ENCODE measurements at regions of chr11 and their contacts with region 1.

Region 1: GRCh38 chr11:122853971-122854446 is 15.7 kb downstream of the CRTAM start:
- DNase-seq: peak in 24 of 35 experiments; percentile 6 to 84 (median 42)
- ATAC-seq: no peak
- H3K4me3 ChIP-seq: no peak overlapping the region
- H3K4me3 Mint-ChIP-seq: no peak overlapping the region
- H3K27ac ChIP-seq: peak overlapping the region; percentile 13
- H3K27ac Mint-ChIP-seq: no peak overlapping the region
- H3K4me1 ChIP-seq: peaks cover 15 to 53% of the 10 kb centered on the region in 2 experiments
- H3K4me1 Mint-ChIP-seq: peaks cover 39 to 52% (median 47%) of the 10 kb centered on the region in 3 donors
- H3K27me3 ChIP-seq: no peaks in the 10 kb centered on the region
- H3K27me3 Mint-ChIP-seq: no peaks in the 10 kb centered on the region

Region 2: DNA sequence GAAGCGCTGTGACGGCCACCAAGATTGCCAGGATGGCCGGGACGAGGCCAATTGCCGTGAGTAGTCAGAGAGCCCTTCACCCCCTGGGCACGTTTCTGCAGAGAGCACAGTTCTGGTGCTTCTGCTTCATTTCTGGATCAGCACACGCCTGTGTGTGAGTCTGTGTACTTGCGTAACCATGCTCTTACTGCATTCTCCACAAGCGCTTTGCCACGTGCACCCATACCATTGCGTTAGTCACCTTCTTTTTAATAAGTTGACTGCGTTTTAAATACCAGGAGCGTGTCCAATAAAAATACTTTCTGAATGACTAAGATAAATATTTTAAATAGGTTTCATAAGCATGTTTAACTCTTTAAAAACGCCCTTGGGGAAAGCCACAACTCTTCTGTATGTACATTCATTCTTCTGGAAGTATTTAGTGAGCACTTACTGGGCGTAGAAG is 1258.3 kb before region 1 on chr11:
- CTCF ChIA-PET with region 1: no interaction called
- POLR2A ChIA-PET with region 1: no interaction called
- DNase-seq: no peak
- ATAC-seq: no peak
- H3K4me3 ChIP-seq: no peak overlapping the region
- H3K4me3 Mint-ChIP-seq: no peak overlapping the region
- H3K27ac ChIP-seq: no peak overlapping the region
- H3K27ac Mint-ChIP-seq: no peak overlapping the region
- H3K4me1 ChIP-seq: peaks cover 0 to 4% of the 10 kb centered on the region in 2 experiments
- H3K4me1 Mint-ChIP-seq: peaks cover 9 to 19% (median 10%) of the 10 kb centered on the region in 3 donors
- H3K27me3 ChIP-seq: no peaks in the 10 kb centered on the region
- H3K27me3 Mint-ChIP-seq: no peaks in the 10 kb centered on the region

Region 3: DNA sequence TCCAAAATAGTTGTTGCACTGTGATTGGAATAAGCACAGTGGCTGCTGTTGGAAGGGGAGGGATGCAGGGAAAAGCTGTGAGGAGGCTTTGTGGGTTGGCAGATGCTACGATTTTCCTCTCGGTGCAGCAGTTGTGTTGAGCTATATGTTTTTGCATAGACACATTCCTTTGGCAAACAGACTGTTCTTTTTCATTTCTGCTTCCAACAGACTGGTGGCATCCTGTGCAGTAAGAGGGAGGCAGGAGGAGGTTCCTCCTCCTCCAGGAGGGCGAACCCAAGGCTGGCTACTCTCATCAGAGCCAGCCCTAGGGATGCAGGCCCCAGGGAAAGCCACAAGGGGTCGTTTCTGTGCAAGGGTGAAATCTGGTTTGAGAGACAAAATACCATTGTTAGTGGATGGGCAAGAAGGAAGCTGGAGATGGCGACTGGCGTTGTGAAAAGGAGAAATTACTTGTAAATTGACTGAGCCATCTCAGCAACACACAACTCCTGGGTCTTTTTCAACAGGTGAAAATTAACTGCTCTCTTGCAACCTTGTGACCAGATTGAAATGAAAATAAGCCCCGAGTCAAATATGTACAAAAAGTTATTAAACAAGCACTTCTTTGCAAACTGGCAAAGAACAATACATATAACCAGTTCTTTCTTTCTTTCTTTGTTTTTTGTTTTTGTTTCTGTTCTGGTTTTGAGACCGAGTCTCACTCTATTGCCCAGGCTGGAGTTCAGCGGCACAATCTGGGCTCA is 225.0 kb before region 1 on chr11:
- CTCF ChIA-PET with region 1: interaction called in 1 of 2 experiments, 20 read pairs
- POLR2A ChIA-PET with region 1: no interaction called
- DNase-seq: peak; percentile 7 to 78 (median 62)
- ATAC-seq: peak; percentile 85 to 94 (median 90)
- H3K4me3 ChIP-seq: no peak overlapping the region
- H3K4me3 Mint-ChIP-seq: no peak overlapping the region
- H3K27ac ChIP-seq: no peak overlapping the region
- H3K27ac Mint-ChIP-seq: no peak overlapping the region
- H3K4me1 ChIP-seq: peaks cover 8 to 10% of the 10 kb centered on the region in 2 experiments
- H3K4me1 Mint-ChIP-seq: peaks cover 7 to 11% (median 7%) of the 10 kb centered on the region in 3 donors
- H3K27me3 ChIP-seq: no peaks in the 10 kb centered on the region
- H3K27me3 Mint-ChIP-seq: no peaks in the 10 kb centered on the region

Region 4: GRCh38 chr11:122808478-122808869 is 45.5 kb before region 1 on chr11:
- CTCF ChIA-PET with region 1: interaction called, 4 to 12 read pairs
- POLR2A ChIA-PET with region 1: interaction called in 1 of 2 experiments, 4 read pairs
- DNase-seq: no peak
- ATAC-seq: no peak
- H3K4me3 ChIP-seq: no peak overlapping the region
- H3K4me3 Mint-ChIP-seq: peak overlapping the region in 1 of 3 donors; percentile 13
- H3K27ac ChIP-seq: no peak overlapping the region
- H3K27ac Mint-ChIP-seq: peak overlapping the region; percentile 62 to 84
- H3K4me1 ChIP-seq: peaks cover 7 to 15% of the 10 kb centered on the region in 2 experiments
- H3K4me1 Mint-ChIP-seq: peaks cover 40 to 56% (median 44%) of the 10 kb centered on the region in 3 donors
- H3K27me3 ChIP-seq: no peaks in the 10 kb centered on the region
- H3K27me3 Mint-ChIP-seq: no peaks in the 10 kb centered on the region

Region 5: DNA sequence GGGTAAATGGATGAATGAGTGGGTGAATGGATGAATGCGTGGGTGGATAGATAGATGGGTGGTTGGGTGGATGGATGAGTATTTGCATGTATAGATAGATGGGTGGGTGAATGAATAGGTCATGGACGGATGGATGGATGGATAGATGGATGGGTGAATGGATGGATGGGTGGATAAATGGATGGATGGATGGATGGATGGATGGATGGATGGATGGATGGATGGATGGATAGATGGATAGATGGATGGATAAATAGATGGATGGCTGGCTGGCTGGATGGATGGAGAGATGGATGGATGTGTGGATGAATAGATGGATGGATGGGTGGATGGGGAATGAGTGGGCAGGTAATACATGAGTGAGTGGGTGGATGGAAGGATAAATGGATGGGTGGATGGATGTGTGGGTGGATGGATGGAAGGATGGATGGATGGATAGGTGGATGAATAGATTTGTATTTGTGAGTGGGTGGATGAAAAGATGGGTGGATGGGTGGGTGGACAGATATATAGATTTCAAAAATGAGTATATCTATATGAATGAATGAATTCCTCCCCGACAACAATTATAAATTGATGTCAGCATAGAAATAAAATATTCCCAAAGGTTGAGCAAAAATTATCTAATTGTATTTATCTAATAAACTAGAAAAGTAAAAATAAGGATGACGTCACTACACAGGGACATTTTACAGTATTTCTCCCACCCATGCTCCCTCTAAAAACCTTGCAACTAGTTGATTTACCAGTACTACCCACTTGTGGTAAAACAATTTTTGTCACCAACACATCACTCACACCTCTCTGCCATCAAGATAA is 16.3 kb before region 1 on chr11:
- CTCF ChIA-PET with region 1: interaction called, 10 to 73 read pairs
- POLR2A ChIA-PET with region 1: interaction called, 3 to 29 read pairs
- DNase-seq: no peak
- ATAC-seq: no peak
- H3K4me3 ChIP-seq: no peak overlapping the region
- H3K4me3 Mint-ChIP-seq: peak overlapping the region; percentile 67 to 79 (median 69)
- H3K27ac ChIP-seq: peak overlapping the region; percentile 79
- H3K27ac Mint-ChIP-seq: peak overlapping the region; percentile 74 to 77
- H3K4me1 ChIP-seq: peaks cover 23 to 28% of the 10 kb centered on the region in 2 experiments
- H3K4me1 Mint-ChIP-seq: peaks cover 32 to 44% (median 38%) of the 10 kb centered on the region in 3 donors
- H3K27me3 ChIP-seq: no peaks in the 10 kb centered on the region
- H3K27me3 Mint-ChIP-seq: no peaks in the 10 kb centered on the region

Region 6: GRCh38 chr11:123062158-123062891 is 208.3 kb after region 1 on chr11:
- CTCF ChIA-PET with region 1: interaction called in 1 of 2 experiments, 4 read pairs
- POLR2A ChIA-PET with region 1: interaction called, 4 to 11 read pairs
- DNase-seq: peak; percentile 98 to 100 (median 99)
- ATAC-seq: peak; percentile 85 to 88 (median 86)
- H3K4me3 ChIP-seq: peak overlapping the region; percentile 98
- H3K4me3 Mint-ChIP-seq: peak overlapping the region; percentile 98 to 99 (median 99)
- H3K27ac ChIP-seq: peak overlapping the region; percentile 99
- H3K27ac Mint-ChIP-seq: peak overlapping the region; percentile 100
- H3K4me1 ChIP-seq: peaks cover 50 to 54% of the 10 kb centered on the region in 2 experiments
- H3K4me1 Mint-ChIP-seq: peaks cover 54 to 73% (median 64%) of the 10 kb centered on the region in 3 donors
- H3K27me3 ChIP-seq: no peaks in the 10 kb centered on the region
- H3K27me3 Mint-ChIP-seq: no peaks in the 10 kb centered on the region